ENCODE measurements at regions of chr2 and their contacts with region 1.

Region 1: DNA sequence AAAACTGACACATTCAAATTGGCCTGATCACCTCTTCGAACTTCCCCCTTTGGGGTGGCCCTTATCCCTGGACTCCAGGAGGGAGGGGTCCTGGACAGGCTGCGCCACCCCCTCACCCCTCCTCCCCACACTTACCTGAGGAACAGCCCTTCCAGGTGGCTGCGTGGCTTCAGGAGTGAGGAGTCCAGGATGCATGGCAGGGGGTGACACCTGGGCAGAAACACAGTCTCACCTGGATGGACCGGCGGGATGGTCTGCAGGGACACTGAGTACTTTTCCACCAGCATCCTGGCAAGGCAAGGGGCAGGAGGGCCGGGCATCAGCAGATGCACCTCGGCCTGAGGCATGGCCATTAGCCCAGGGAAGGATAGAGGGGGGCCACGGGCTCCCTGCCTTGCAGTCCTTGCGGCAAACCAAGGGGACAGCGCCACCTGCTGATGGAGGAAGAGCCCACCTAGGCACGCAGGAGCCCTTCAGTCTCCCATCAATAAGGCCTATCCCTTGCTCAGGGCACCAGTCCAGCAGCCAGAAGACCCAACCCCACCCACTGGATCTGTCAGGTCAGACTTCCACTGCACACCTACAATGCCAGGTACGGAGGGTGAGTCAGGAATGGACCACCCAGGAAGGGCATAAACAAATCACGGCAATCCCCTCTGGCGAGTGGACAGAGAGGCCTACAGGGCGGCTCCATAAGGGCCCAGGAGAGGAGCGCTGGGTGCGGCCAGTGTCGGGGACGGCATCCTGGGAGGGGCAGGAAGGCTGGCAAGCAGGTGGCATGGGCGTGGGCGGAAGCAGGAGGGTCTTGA is 26.0 kb downstream of the FAM178B start:
- DNase-seq: peak; percentile 88
- H3K4me3 ChIP-seq: no peak overlapping the region
- H3K27ac ChIP-seq: no peak overlapping the region
- H3K4me1 ChIP-seq: peaks cover 18% of the 10 kb centered on the region
- H3K27me3 ChIP-seq: no peaks in the 10 kb centered on the region
- CTCF ChIP-seq: peak; percentile 96

Region 2: DNA sequence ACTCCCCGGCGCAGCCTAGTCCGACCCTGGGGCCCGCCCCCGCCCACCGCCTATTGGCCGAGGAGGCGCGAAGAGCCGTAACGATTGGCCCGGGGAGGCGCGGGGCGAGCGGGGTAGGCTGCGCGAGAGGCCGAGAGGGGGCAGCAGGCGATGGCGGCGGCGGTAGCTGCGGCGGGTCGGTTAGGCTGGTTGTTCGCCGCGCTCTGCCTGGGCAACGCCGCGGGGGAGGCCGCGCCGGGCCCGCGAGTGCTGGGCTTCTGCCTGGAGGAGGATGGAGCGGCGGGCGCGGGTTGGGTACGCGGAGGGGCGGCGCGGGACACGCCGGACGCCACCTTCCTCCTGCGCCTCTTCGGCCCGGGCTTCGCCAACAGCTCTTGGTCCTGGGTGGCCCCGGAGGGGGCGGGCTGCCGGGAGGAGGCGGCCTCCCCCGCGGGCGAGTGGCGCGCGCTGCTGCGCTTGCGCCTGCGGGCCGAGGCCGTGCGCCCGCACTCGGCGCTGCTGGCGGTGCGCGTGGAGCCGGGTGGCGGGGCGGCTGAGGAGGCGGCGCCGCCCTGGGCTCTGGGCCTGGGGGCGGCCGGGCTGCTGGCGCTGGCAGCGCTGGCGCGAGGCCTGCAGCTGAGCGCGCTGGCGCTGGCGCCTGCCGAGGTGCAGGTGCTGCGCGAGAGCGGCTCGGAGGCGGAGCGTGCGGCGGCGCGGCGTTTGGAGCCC is 144.1 kb before region 1 on chr2 and contains the start of gene CNNM3:
- CTCF ChIA-PET with region 1: no interaction called
- POLR2A ChIA-PET with region 1: no interaction called
- intact Hi-C with region 1: loop called (anchors 5 kb)
- DNase-seq: peak; percentile 97
- H3K4me3 ChIP-seq: peak within 1 kb of the TSS; percentile 83
- H3K27ac ChIP-seq: peak within 1 kb of the TSS; percentile 72
- H3K4me1 ChIP-seq: no peaks in the 10 kb centered on the region
- H3K27me3 ChIP-seq: no peaks in the 10 kb centered on the region
- CTCF ChIP-seq: peak; percentile 52
- total RNA-seq, gene CNNM3: 20.3 and 20.9 TPM in 2 replicates

Region 3: GRCh38 chr2:96945012-96945804 is 15.1 kb before region 1 on chr2:
- CTCF ChIA-PET with region 1: no interaction called
- POLR2A ChIA-PET with region 1: no interaction called
- intact Hi-C with region 1: no loop called
- DNase-seq: no peak
- H3K4me3 ChIP-seq: no peak overlapping the region
- H3K27ac ChIP-seq: no peak overlapping the region
- H3K4me1 ChIP-seq: no peaks in the 10 kb centered on the region
- H3K27me3 ChIP-seq: no peaks in the 10 kb centered on the region
- CTCF ChIP-seq: no peak